Panc1 (cell line): ENCODE measurements at regions of chr15 and their contacts with region 1.

Region 1: GRCh38 chr15:26095710-26096330 is 232.7 kb upstream of the ATP10A start:
- DNase-seq: no peak
- ATAC-seq: no peak
- H3K4me3 ChIP-seq: no peak overlapping the region
- H3K27ac ChIP-seq: no peak overlapping the region
- H3K4me1 ChIP-seq: no peaks in the 10 kb centered on the region
- H3K27me3 ChIP-seq: no peaks in the 10 kb centered on the region
- CTCF ChIP-seq: peak; percentile 59

Region 2: DNA sequence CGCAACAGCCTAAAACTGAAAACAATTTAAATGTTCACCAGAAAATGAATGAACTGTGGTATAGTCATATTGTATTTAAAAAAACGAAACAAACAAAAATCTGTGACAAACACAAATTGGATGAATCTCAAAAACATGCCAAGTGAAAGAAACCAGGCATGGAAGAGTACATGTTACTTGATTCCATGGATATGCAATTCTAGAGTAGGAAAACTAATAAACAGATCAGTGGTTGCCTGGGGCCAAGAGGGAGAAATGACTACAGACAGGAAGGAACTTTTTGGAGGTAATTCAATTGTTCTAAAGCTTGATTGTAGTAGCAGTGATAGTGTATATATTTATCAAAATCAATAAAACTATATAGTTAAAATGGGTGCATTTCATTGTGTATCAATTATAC is 673.8 kb before region 1 on chr15:
- CTCF ChIA-PET with region 1: no interaction called
- POLR2A ChIA-PET with region 1: interaction called, 12 read pairs
- in situ Hi-C with region 1: no loop called
- intact Hi-C with region 1: no loop called
- DNase-seq: no peak
- ATAC-seq: no peak
- H3K4me3 ChIP-seq: no peak overlapping the region
- H3K27ac ChIP-seq: no peak overlapping the region
- H3K4me1 ChIP-seq: no peaks in the 10 kb centered on the region
- H3K27me3 ChIP-seq: no peaks in the 10 kb centered on the region
- CTCF ChIP-seq: no peak

Region 3: DNA sequence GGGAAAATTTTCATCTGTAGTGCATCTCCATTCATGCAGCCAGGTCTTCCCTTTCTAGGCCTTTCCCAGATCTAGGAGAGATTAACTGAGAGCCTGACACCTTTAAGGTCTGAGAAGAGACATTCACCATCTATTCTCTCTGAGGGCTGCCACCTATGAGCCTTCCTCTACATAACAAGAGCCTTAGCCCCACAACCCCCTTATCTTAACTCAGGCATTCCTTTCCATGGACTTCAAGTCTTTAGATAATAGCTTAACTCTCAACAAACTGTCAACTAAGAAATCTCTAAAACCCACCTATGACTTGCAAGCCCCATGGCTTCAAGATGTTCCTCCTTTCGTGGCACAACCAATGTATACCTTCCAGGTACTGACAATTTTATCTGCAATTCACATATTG is 556.1 kb after region 1 on chr15:
- CTCF ChIA-PET with region 1: no interaction called
- POLR2A ChIA-PET with region 1: no interaction called
- in situ Hi-C with region 1: no loop called
- intact Hi-C with region 1: no loop called
- DNase-seq: no peak
- ATAC-seq: no peak
- H3K4me3 ChIP-seq: no peak overlapping the region
- H3K27ac ChIP-seq: no peak overlapping the region
- H3K4me1 ChIP-seq: no peaks in the 10 kb centered on the region
- H3K27me3 ChIP-seq: no peaks in the 10 kb centered on the region
- CTCF ChIP-seq: no peak